Activated CD4-positive, alpha-beta memory T cell treated with anti-CD3 and anti-CD28 coated beads, Interleukin-2, amount 10 ng/mL, durations not matched to agents 7 days and 5 days (primary cell): ENCODE measurements at regions of chr11 and their contacts with region 1.

Region 1: DNA sequence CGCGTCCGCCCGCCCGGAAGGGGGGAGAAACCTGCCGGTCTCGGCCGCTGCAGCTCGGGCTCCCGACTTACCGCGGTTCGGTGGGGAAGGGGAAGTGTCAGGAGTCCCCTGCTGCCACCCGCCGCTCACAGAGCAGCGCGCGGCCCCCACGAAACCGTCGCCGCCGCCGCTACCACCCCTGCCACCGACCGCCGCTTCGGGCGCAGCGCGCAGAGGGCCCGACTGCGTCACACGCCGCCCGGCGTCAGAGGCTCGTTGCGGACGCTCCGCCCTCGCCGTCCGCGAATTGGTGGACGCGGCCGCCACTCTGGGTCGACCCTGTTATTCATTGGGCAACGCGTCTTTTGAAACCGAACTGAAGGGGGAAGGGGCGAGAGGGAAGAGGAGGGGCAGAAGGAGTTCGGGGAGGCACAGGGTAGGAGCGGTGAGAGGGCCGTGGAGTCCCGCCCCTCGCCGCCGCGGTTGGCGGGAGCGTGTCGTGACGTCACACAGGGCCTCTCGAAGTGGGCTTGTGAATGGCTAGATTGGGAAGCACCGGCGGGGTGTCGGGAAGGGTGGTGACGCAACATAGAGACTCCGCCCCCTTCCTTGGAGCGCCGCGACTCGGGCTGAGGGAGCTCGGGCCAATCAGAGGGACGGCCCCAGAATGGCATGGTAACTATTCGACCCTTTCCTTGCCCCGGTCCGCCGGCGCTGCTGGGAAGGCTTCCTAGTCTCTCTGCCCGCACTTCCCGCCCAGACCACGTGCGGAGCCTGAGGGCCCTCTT is at the start of gene NUP98:
- DNase-seq: peak; percentile 100
- H3K4me3 Mint-ChIP-seq: peak within 1 kb of the TSS; percentile 93
- H3K27ac Mint-ChIP-seq: peak within 1 kb of the TSS; percentile 92
- H3K4me1 Mint-ChIP-seq: peaks cover 51% of the 10 kb centered on the region
- H3K27me3 Mint-ChIP-seq: no peaks in the 10 kb centered on the region
- total RNA-seq, gene NUP98: 93.9 to 95.2 TPM

Region 2: DNA sequence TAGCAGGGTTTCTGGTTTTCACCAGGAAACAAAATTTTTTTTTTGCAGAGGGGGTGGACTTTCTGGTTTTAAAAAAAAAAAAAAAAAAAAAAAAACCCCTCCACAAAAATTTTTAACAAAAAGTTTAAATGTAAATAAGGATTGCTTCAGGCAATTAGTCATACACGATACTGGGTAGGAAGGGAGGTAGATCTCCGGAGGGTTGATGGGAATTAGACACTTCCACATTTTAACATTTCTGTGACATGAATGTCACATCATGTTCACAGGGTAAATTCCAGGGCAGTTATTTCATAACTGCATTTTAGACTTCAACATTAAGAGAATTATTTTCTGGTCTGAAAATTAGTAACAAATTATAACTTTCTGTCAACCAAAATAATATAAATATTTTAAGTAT is 16.1 kb before region 1 on chr11:
- CTCF ChIA-PET with region 1: interaction called, 23 read pairs
- POLR2A ChIA-PET with region 1: interaction called, 33 read pairs
- DNase-seq: no peak
- H3K4me3 Mint-ChIP-seq: no peak overlapping the region
- H3K27ac Mint-ChIP-seq: peak overlapping the region; percentile 12
- H3K4me1 Mint-ChIP-seq: peaks cover 50% of the 10 kb centered on the region
- H3K27me3 Mint-ChIP-seq: no peaks in the 10 kb centered on the region

Region 3: GRCh38 chr11:3786781-3787428 is 10.6 kb before region 1 on chr11:
- CTCF ChIA-PET with region 1: interaction called, 23 read pairs
- POLR2A ChIA-PET with region 1: interaction called, 33 read pairs
- DNase-seq: no peak
- H3K4me3 Mint-ChIP-seq: no peak overlapping the region
- H3K27ac Mint-ChIP-seq: peak overlapping the region; percentile 63
- H3K4me1 Mint-ChIP-seq: peaks cover 75% of the 10 kb centered on the region
- H3K27me3 Mint-ChIP-seq: no peaks in the 10 kb centered on the region

Region 4: GRCh38 chr11:3834664-3835461 is 37.4 kb after region 1 on chr11:
- CTCF ChIA-PET with region 1: no interaction called
- POLR2A ChIA-PET with region 1: interaction called, 34 read pairs
- DNase-seq: peak; percentile 30
- H3K4me3 Mint-ChIP-seq: peak overlapping the region; percentile 64
- H3K27ac Mint-ChIP-seq: peak overlapping the region; percentile 62
- H3K4me1 Mint-ChIP-seq: peaks cover 93% of the 10 kb centered on the region
- H3K27me3 Mint-ChIP-seq: no peaks in the 10 kb centered on the region

Region 5: GRCh38 chr11:4118107-4118506 is 320.6 kb after region 1 on chr11:
- CTCF ChIA-PET with region 1: no interaction called
- POLR2A ChIA-PET with region 1: no interaction called
- DNase-seq: no peak
- H3K4me3 Mint-ChIP-seq: no peak overlapping the region
- H3K27ac Mint-ChIP-seq: peak overlapping the region; percentile 59
- H3K4me1 Mint-ChIP-seq: peaks cover 18% of the 10 kb centered on the region
- H3K27me3 Mint-ChIP-seq: no peaks in the 10 kb centered on the region